ENCODE measurements at regions of chr2 and their contacts with region 1.

Region 1: DNA sequence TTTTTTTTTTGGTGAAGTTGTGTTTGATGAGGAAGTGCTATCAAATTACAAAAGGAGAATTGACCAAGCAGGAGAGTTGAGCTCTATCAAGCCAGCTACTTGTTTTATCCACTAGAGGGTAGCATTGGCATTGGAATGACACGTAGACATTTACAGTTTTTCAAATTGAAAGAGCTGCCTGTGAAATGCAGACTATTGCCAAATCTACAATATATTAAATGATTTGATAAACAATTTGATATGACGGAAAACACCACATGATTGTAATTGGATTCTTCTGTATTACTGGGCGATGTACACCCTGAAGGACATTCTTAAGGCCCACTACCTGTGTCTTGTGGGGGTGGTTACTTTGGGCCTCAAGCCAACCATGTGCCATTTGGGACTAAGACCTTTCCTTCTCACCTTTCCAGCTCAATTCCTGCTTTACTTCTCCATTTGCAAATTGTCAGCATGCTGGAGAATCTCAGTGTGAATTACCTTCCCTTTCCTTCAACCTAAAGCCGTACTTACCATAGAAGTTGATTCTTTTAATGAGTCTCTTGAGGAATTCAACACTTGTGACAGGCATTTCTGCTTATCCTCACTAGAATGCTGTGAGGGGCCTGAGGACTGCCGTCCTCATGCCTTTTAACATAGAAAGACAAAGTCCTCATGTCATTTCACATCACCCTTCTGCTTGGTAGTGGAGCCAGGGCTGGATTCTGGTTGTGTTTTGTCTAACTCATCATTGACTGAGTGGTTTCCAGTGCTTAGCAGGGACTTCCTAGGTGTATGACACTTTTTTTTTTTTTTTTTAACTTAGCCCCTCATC is 134.8 kb upstream of the THUMPD2 start:
- DNase-seq: no peak

Region 2: GRCh38 chr2:39932198-39932597 is 18.3 kb after region 1 on chr2:
- intact Hi-C with region 1: no loop called
- DNase-seq: no peak

Region 3: GRCh38 chr2:40451918-40452605 is 538.2 kb after region 1 on chr2 and contains the start of gene SLC8A1:
- intact Hi-C with region 1: loop called in 1 of 2 experiments (anchors 10 kb)
- DNase-seq: peak; percentile 78
- total RNA-seq, gene SLC8A1: 105 to 121 TPM

Region 4: GRCh38 chr2:40554668-40555285 is 640.9 kb after region 1 on chr2:
- intact Hi-C with region 1: loop called in 1 of 2 experiments (anchors 10 kb)
- DNase-seq: no peak

Region 5: DNA sequence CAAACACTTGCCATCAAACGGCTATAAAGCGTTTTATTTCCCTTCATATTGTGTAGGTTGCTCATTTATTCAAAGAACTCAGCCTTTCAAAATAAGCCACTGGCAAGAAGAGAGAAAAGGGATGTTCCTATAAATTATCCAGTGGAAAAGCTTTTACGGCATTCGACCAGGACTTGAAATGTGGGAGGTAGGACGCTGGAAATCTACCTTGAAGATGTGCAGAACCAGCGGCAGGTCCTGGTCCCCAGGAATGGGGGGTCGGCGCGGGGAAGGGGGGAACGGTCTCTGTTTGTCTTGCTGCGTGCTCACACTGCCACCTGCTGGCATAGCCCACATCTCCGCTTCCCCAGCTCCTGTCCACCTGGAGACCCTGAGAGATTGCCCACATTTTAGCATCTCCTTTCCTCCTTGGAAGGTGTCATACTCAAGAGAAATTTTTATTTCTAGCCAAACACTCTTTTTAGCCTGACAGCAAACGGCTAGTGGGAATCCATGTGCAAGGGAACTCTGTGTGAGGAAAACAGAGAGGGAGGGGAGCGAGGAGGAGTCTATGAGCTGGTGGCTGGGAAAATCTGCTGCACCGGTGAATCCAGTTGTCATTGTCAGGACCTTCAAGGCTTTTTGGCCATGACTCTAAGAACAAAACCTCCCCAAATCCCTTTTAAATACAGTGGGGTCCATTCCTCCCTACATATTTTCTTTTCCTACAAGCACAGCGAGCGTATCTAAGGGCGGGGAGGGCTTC is 1785.0 kb after region 1 on chr2:
- intact Hi-C with region 1: loop called in 1 of 2 experiments (anchors 10 kb)
- DNase-seq: peak; percentile 80